ENCODE measurements at regions of chr6 and their contacts with region 1.

Region 1: GRCh38 chr6:36885461-36886401 is at the start of gene C6orf89:
- DNase-seq: peak; percentile 99
- H3K4me3 Mint-ChIP-seq: peak within 1 kb of the TSS; percentile 89
- H3K27ac Mint-ChIP-seq: peak within 1 kb of the TSS; percentile 89
- H3K4me1 Mint-ChIP-seq: peaks cover 28% of the 10 kb centered on the region
- H3K27me3 Mint-ChIP-seq: no peaks in the 10 kb centered on the region
- total RNA-seq, gene C6orf89: 25.9 and 27.4 TPM in 2 replicates

Region 2: GRCh38 chr6:36874443-36875249 is 11.1 kb before region 1 on chr6 and contains the start of gene PPIL1:
- intact Hi-C with region 1: loop called (anchors 1 kb)
- DNase-seq: peak; percentile 94
- H3K4me3 Mint-ChIP-seq: peak within 1 kb of the TSS; percentile 99
- H3K27ac Mint-ChIP-seq: peak within 1 kb of the TSS; percentile 98
- H3K4me1 Mint-ChIP-seq: peaks cover 38% of the 10 kb centered on the region
- H3K27me3 Mint-ChIP-seq: peaks cover 3% of the 10 kb centered on the region
- total RNA-seq, gene PPIL1: 65.0 and 65.1 TPM in 2 replicates